ENCODE measurements at regions of chr6 and their contacts with region 1.

Region 1: DNA sequence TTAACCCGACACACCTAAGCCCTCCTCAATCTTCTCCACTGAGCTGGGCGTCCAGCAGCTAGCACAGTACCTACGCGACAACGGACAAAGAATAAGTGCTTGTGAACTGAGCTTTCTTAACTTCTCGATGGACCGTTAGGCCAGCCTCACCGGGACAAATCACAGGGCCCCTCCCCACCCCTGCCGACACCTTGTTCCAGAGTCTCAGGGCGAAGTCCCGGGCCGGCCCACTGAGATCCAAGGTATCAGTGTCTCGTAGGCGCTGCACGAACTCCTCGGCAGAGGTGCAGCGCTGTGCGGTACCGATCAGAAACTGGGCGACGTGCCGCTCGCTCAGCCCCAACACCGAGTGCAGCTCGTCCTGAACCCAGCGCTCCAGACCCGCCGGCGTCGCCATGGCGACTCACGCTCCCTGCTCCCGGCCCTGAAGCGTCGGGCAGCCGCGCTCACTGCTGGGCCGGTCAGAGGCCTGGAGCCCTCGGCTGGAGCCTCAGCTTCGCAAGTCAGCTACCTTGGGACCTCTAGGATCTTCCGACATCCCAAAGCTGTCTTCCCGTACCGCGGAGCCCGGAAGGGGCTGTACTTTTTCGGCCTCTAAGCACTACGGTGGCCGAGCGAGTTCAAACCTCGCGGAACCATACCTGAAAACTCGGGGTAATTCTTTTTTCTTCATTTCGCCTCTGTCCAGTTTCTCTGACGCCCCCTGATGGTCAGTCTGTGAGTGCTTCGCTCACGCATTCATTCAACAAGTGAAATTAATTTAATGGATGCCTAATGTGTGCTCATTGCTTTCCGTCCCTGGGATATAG is at the start of gene DHX16:
- DNase-seq: peak; percentile 85 to 96
- ATAC-seq: peak; percentile 88 to 97 (median 89)
- H3K4me3 ChIP-seq: peak within 1 kb of the TSS; percentile 76
- H3K4me3 Mint-ChIP-seq: peak within 1 kb of the TSS; percentile 87
- H3K27ac ChIP-seq: peak within 1 kb of the TSS; percentile 24
- H3K27ac Mint-ChIP-seq: peak within 1 kb of the TSS; percentile 83 to 85
- H3K4me1 ChIP-seq: peaks cover 17% of the 10 kb centered on the region
- H3K4me1 Mint-ChIP-seq: peaks cover 27 to 49% of the 10 kb centered on the region in 2 donors
- H3K27me3 ChIP-seq: no peaks in the 10 kb centered on the region
- H3K27me3 Mint-ChIP-seq: no peaks in the 10 kb centered on the region
- CTCF ChIP-seq: peak; percentile 68
- total RNA-seq, gene DHX16: 27.3 to 35.7 (median 27.7) TPM

Region 2: GRCh38 chr6:30541515-30542403 is 130.9 kb before region 1 on chr6:
- intact Hi-C with region 1: loop called (anchors 2 kb)
- DNase-seq: peak; percentile 76 to 94
- ATAC-seq: peak; percentile 72 to 83 (median 72)
- H3K4me3 ChIP-seq: peak overlapping the region; percentile 4
- H3K4me3 Mint-ChIP-seq: peak overlapping the region; percentile 86
- H3K27ac ChIP-seq: peak overlapping the region; percentile 32
- H3K27ac Mint-ChIP-seq: peak overlapping the region; percentile 69 to 81
- H3K4me1 ChIP-seq: peaks cover 30% of the 10 kb centered on the region
- H3K4me1 Mint-ChIP-seq: peaks cover 32 to 34% of the 10 kb centered on the region in 2 donors
- H3K27me3 ChIP-seq: no peaks in the 10 kb centered on the region
- H3K27me3 Mint-ChIP-seq: no peaks in the 10 kb centered on the region
- CTCF ChIP-seq: peak; percentile 94

Region 3: DNA sequence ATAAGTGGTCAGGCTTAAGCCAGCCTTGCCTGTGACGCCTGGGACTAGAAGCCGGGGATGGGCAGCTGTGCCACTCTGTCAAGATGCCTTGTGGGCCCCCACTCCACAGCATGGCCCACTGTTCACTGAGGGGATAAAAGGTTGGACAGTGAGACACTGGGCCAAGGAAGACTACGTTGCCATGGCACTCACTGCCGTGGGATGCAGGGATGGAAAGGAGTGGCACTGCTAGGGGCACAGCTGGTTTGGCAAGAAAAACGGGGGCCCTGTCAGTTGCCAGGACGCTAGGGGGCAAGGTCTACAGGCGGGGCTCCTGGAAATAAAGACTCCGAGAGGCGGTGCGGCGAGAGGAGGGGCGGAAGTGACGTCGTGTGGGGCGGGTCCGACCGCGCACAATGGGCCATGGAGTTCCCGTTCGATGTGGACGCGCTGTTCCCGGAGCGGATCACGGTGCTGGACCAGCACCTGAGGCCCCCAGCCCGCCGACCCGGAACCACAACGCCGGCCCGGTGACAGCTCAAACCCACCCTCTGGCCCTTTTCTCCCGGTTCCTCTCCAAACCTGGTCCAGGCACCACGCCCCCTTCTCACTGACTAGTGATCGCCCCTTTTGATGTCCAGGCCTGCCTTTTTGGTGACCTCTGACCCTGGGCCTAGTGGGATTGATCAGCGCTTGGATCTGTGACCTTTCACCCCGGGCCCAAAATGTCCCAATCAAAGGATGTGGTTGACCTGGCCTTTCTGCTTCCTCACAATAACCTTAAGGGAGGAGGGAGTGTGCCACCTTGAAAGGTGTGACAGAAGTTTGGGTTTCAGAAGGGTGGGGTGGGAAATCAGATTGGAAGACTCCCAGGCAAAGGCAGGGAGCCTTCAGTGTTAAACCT is 45.9 kb before region 1 on chr6 and contains the start of gene ATAT1:
- intact Hi-C with region 1: loop called (anchors 2 kb)
- DNase-seq: peak; percentile 87 to 95
- ATAC-seq: peak; percentile 98 to 99 (median 99)
- H3K4me3 ChIP-seq: peak within 1 kb of the TSS; percentile 63
- H3K4me3 Mint-ChIP-seq: peak within 1 kb of the TSS; percentile 90
- H3K27ac ChIP-seq: peak within 1 kb of the TSS; percentile 87
- H3K27ac Mint-ChIP-seq: peak within 1 kb of the TSS; percentile 94 to 96
- H3K4me1 ChIP-seq: peaks cover 15% of the 10 kb centered on the region
- H3K4me1 Mint-ChIP-seq: peaks cover 23 to 27% of the 10 kb centered on the region in 2 donors
- H3K27me3 ChIP-seq: no peaks in the 10 kb centered on the region
- H3K27me3 Mint-ChIP-seq: no peaks in the 10 kb centered on the region
- CTCF ChIP-seq: peak; percentile 55
- total RNA-seq, gene ATAT1: 8.1 to 10.8 (median 8.9) TPM

Region 4: GRCh38 chr6:30686908-30687658 is 14.4 kb after region 1 on chr6:
- intact Hi-C with region 1: no loop called
- DNase-seq: peak; percentile 64 to 78
- ATAC-seq: peak; percentile 25 to 45 (median 30)
- H3K4me3 ChIP-seq: peak overlapping the region; percentile 96
- H3K4me3 Mint-ChIP-seq: peak overlapping the region; percentile 96
- H3K27ac ChIP-seq: peak overlapping the region; percentile 96
- H3K27ac Mint-ChIP-seq: peak overlapping the region; percentile 91 to 98
- H3K4me1 ChIP-seq: peaks cover 68% of the 10 kb centered on the region
- H3K4me1 Mint-ChIP-seq: peaks cover 63 to 80% of the 10 kb centered on the region in 2 donors
- H3K27me3 ChIP-seq: no peaks in the 10 kb centered on the region
- H3K27me3 Mint-ChIP-seq: no peaks in the 10 kb centered on the region
- CTCF ChIP-seq: no peak

Measured in natural killer cell (primary cell).